ENCODE measurements at regions of chr7 and their contacts with region 1.

Region 1: GRCh38 chr7:112414855-112415490 is 35.3 kb upstream of the IFRD1 start:
- DNase-seq: peak; percentile 30
- H3K4me3 ChIP-seq: no peak overlapping the region
- H3K27ac ChIP-seq: no peak overlapping the region
- H3K4me1 ChIP-seq: peaks cover 3% of the 10 kb centered on the region
- H3K27me3 ChIP-seq: no peaks in the 10 kb centered on the region
- CTCF ChIP-seq: peak; percentile 63 to 66

Region 2: GRCh38 chr7:111741811-111742240 is 673.1 kb before region 1 on chr7:
- CTCF ChIA-PET with region 1: no interaction called
- dilution Hi-C with region 1: no loop called
- in situ Hi-C with region 1: loop called in 1 of 2 experiments (anchors 10 kb)
- intact Hi-C with region 1: no loop called
- DNase-seq: peak; percentile 60
- H3K4me3 ChIP-seq: no peak overlapping the region
- H3K27ac ChIP-seq: no peak overlapping the region
- H3K4me1 ChIP-seq: no peaks in the 10 kb centered on the region
- H3K27me3 ChIP-seq: no peaks in the 10 kb centered on the region
- CTCF ChIP-seq: peak; percentile 67 to 77

Region 3: GRCh38 chr7:111763221-111763801 is 651.7 kb before region 1 on chr7:
- CTCF ChIA-PET with region 1: no interaction called
- dilution Hi-C with region 1: no loop called
- in situ Hi-C with region 1: loop called in 1 of 2 experiments (anchors 10 kb)
- intact Hi-C with region 1: loop called (anchors 1 kb)
- DNase-seq: peak; percentile 29
- H3K4me3 ChIP-seq: no peak overlapping the region
- H3K27ac ChIP-seq: no peak overlapping the region
- H3K4me1 ChIP-seq: no peaks in the 10 kb centered on the region
- H3K27me3 ChIP-seq: no peaks in the 10 kb centered on the region
- CTCF ChIP-seq: peak; percentile 45 to 65

Region 4: GRCh38 chr7:111953611-111954010 is 461.4 kb before region 1 on chr7:
- CTCF ChIA-PET with region 1: interaction called, 11 read pairs
- dilution Hi-C with region 1: no loop called
- in situ Hi-C with region 1: loop called in 1 of 2 experiments (anchors 25 kb)
- intact Hi-C with region 1: loop called (anchors 1 kb)
- DNase-seq: peak; percentile 92
- H3K4me3 ChIP-seq: no peak overlapping the region
- H3K27ac ChIP-seq: peak overlapping the region; percentile 73
- H3K4me1 ChIP-seq: peaks cover 13% of the 10 kb centered on the region
- H3K27me3 ChIP-seq: no peaks in the 10 kb centered on the region
- CTCF ChIP-seq: peak; percentile 20 to 58

Region 5: DNA sequence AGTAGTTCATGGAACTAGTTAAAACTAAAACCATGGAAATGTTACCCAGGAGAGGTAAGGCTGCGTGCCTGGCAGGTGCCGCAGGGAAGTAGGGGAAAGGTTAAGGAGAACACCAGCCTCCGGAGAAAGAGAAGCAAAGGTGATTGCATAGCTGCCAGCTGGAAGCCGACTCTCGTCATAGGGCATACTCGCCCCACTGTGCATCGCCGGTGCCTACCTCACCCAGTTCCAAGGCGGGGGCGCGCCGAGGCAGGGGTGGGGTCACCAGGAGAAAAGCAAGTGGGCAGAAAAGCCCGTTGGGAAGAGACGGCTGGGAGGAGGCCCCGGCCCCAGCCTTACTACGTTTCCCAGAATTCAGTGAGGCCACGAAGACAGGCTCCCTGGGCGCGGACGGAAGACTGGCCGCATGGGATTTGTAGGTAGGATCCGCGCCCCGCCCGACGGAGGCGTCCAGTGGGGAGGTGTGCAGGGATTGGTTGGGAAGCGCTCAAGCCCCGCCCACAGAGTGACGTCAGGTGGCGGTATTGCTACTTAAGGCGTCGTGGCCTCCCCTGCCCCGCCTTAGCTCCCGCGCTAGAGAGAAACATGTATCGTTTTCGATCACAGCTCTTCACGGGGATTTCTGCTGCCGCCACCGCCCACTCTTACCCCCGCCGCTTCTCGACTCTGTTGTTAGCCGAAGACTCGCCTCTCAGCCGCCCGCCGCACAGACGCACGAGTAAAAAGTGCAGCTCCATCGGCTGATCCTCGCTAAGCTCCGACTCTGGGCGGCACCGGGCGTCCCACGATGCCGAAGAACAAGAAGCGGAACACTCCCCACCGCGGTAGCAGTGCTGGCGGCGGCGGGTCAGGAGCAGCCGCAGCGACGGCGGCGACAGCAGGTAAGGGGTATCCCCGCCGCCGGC is 35.2 kb after region 1 on chr7 and contains the start of gene IFRD1:
- CTCF ChIA-PET with region 1: interaction called, 6 read pairs
- dilution Hi-C with region 1: no loop called
- in situ Hi-C with region 1: no loop called
- intact Hi-C with region 1: loop called (anchors 1 kb)
- DNase-seq: peak; percentile 98
- H3K4me3 ChIP-seq: peak within 1 kb of the TSS; percentile 80 to 100 (median 96)
- H3K27ac ChIP-seq: peak within 1 kb of the TSS; percentile 81
- H3K4me1 ChIP-seq: peaks cover 31% of the 10 kb centered on the region
- H3K27me3 ChIP-seq: no peaks in the 10 kb centered on the region
- CTCF ChIP-seq: no peak
- total RNA-seq, gene IFRD1: 74.2 to 76.2 TPM

Measured in mammary epithelial cell (primary cell).